CD4-positive, alpha-beta memory T cell (primary cell): ENCODE measurements at regions of chr6 and their contacts with region 1.

Region 1: DNA sequence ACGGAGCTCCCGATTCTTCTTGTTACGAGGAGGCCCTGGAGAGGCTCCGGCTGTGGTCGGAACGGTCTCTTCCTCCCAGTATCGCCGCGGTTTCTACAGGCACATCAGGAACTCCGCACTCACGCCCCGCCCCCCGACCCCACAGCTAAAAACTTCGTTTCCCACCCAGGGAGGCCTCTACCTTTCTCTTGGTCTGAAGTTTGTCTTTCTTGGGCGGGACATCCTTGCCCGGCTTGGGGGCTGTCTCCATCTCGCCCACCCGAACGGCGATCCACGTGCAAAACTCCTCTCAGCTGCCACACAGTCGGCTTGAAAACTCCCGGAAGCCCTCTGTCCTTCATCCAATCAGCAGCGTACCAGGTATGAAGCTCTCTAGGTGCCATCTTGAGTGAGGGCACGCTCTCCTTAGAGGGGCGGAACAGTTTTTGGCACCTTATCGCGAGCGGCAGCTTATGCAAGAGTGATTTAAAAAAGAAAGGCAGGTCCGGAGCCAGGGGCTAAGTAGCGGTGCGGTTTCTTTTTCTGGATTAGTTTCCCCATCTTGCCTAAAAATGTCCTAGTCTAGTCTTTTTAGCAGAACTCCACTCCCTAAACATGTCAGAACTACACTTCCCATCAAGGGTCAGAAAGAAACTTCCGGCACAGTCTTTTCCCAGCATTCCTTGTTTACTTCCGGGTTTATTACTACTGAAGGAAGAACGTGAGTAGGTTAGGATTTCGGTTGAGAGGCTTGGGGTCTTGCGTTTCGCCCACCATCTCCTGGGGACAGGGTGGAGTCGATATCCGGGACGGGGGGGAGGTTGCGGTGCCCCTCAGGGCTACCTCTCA is at the starts of genes PFDN6 and WDR46:
- DNase-seq: peak; percentile 87 to 92 (median 89)
- H3K4me3 ChIP-seq: peak within 1 kb of the TSS; percentile 73 to 84
- H3K4me3 Mint-ChIP-seq: peak within 1 kb of the TSS; percentile 96 to 100 (median 98)
- H3K27ac ChIP-seq: peak within 1 kb of the TSS; percentile 71
- H3K27ac Mint-ChIP-seq: peak within 1 kb of the TSS; percentile 79 to 98 (median 95)
- H3K4me1 ChIP-seq: peaks cover 30% of the 10 kb centered on the region
- H3K4me1 Mint-ChIP-seq: peaks cover 24 to 48% (median 36%) of the 10 kb centered on the region in 4 donors
- H3K27me3 ChIP-seq: no peaks in the 10 kb centered on the region
- H3K27me3 Mint-ChIP-seq: no peaks in the 10 kb centered on the region
- total RNA-seq, gene PFDN6: 43.6 to 45.5 TPM
- total RNA-seq, gene WDR46: 60.8 to 66.1 TPM

Region 2: DNA sequence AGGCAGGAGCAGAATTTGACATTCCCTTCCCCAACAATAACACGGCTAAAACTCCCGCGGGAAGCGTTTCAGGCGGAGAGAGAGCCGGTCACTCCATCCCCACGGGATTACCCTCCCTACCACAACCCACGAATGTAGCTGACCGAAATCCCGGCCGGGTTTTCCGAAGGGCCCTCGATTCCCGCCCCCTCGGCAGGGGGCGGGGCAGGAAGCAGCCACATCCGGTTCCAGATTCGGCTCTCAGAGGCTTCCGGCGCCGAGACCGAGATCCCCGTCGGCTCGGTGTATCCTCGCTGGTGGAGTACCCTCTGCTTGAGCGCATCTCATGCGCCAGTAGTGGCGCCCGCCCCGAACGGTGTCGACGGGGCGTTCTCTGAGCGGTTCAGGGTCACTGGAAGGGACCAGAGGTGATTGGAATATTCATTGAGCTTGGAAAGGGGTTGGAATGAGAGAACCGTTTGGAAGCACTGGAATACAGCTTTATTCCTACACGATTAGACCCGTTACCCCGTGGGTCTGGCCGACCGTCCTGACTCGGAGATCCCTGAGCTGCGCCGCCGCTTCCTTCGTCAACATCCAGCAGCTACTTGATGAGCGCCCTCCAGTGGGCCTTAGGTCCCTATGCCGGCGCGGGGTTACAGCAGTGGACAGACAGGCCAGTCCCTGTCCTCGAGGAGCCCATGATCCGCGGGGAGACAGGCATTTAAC is 10.3 kb after region 1 on chr6:
- CTCF ChIA-PET with region 1: interaction called, 14 read pairs
- POLR2A ChIA-PET with region 1: interaction called, 150 read pairs
- intact Hi-C with region 1: loop called (anchors 1 kb)
- DNase-seq: peak; percentile 91 to 94 (median 93)
- H3K4me3 ChIP-seq: peak overlapping the region; percentile 71 to 97
- H3K4me3 Mint-ChIP-seq: peak overlapping the region; percentile 99
- H3K27ac ChIP-seq: peak overlapping the region; percentile 94
- H3K27ac Mint-ChIP-seq: peak overlapping the region; percentile 96 to 100 (median 99)
- H3K4me1 ChIP-seq: peaks cover 27% of the 10 kb centered on the region
- H3K4me1 Mint-ChIP-seq: peaks cover 22 to 42% (median 31%) of the 10 kb centered on the region in 4 donors
- H3K27me3 ChIP-seq: no peaks in the 10 kb centered on the region
- H3K27me3 Mint-ChIP-seq: peaks cover 0 to 4% of the 10 kb centered on the region in 2 donors

Region 3: GRCh38 chr6:33317669-33318425 is 28.7 kb after region 1 on chr6 and contains the start of gene ZBTB22:
- CTCF ChIA-PET with region 1: interaction called, 3 read pairs
- POLR2A ChIA-PET with region 1: interaction called, 62 read pairs
- intact Hi-C with region 1: loop called (anchors 1 kb)
- DNase-seq: peak; percentile 96 to 99 (median 97)
- H3K4me3 ChIP-seq: peak within 1 kb of the TSS; percentile 73 to 100
- H3K4me3 Mint-ChIP-seq: peak within 1 kb of the TSS; percentile 98 to 100 (median 99)
- H3K27ac ChIP-seq: peak within 1 kb of the TSS; percentile 83
- H3K27ac Mint-ChIP-seq: peak within 1 kb of the TSS; percentile 98 to 99 (median 98)
- H3K4me1 ChIP-seq: peaks cover 73% of the 10 kb centered on the region
- H3K4me1 Mint-ChIP-seq: peaks cover 40 to 100% (median 62%) of the 10 kb centered on the region in 4 donors
- H3K27me3 ChIP-seq: no peaks in the 10 kb centered on the region
- H3K27me3 Mint-ChIP-seq: no peaks in the 10 kb centered on the region
- total RNA-seq, gene ZBTB22: 28.6 to 28.7 TPM

Region 4: DNA sequence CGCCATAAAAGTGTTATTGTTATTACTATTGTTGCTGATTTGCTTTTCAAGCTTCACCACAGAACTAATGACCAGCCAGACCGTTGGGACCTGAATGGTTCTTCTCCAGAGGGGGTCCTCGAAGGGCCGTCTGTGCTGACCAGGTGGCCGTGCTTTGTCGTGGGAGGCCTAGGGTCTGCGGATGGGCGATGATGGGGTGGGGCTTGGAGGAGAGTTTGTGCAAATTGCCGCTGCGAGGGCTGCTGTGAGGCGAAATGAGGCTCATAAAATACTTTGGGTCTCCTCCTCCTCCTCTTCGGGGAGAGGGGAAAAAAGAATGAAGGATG is 34.5 kb after region 1 on chr6:
- CTCF ChIA-PET with region 1: no interaction called
- POLR2A ChIA-PET with region 1: interaction called, 33 read pairs
- intact Hi-C with region 1: loop called (anchors 1 kb)
- DNase-seq: no peak
- H3K4me3 ChIP-seq: peak overlapping the region; percentile 53 to 68
- H3K4me3 Mint-ChIP-seq: peak overlapping the region; percentile 94 to 100 (median 98)
- H3K27ac ChIP-seq: peak overlapping the region; percentile 88
- H3K27ac Mint-ChIP-seq: peak overlapping the region; percentile 89 to 100 (median 96)
- H3K4me1 ChIP-seq: peaks cover 47% of the 10 kb centered on the region
- H3K4me1 Mint-ChIP-seq: peaks cover 32 to 59% (median 46%) of the 10 kb centered on the region in 4 donors
- H3K27me3 ChIP-seq: no peaks in the 10 kb centered on the region
- H3K27me3 Mint-ChIP-seq: no peaks in the 10 kb centered on the region

Region 5: DNA sequence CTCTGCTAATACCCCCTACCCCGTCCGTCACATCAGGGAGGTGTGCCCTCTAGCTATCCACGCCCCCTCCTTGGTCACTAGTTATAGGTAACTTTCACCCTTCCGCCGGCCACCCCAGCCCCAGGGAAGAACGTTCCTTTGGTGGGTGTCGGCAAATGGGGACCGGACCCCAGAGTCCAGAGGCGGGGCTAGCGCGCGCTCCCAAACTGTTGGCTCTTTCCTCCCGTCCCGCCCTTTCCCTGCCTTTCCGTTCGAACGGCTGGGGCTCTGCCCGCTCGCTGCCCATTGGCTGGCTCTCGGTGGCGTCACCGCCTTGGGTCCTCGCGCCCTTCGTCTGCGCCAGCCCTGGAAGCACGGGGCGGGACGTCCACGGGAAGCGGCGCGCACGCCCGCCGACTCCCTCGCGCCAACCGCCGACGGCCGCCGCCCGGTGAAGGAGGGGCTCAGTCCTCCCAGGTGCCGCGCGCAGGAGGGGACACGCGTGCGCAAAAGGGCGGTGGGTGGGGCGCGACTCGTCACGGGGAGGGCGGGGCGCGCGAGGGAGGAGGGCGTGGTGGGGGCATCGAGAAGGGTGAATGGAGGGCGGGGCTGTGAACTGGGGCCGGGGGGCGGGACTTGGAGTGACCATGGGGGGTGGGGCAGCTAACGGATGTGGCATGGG is 121.0 kb after region 1 on chr6:
- CTCF ChIA-PET with region 1: no interaction called
- POLR2A ChIA-PET with region 1: interaction called, 10 read pairs
- intact Hi-C with region 1: no loop called
- DNase-seq: peak; percentile 97 to 98 (median 97)
- H3K4me3 ChIP-seq: peak overlapping the region; percentile 67 to 92
- H3K4me3 Mint-ChIP-seq: peak overlapping the region; percentile 85 to 95 (median 92)
- H3K27ac ChIP-seq: peak overlapping the region; percentile 99
- H3K27ac Mint-ChIP-seq: peak overlapping the region; percentile 94 to 100 (median 99)
- H3K4me1 ChIP-seq: peaks cover 57% of the 10 kb centered on the region
- H3K4me1 Mint-ChIP-seq: peaks cover 31 to 68% (median 48%) of the 10 kb centered on the region in 4 donors
- H3K27me3 ChIP-seq: no peaks in the 10 kb centered on the region
- H3K27me3 Mint-ChIP-seq: no peaks in the 10 kb centered on the region